Heart left ventricle (tissue), 16 donors: ENCODE measurements at regions of chr2 and their contacts with region 1.

Region 1: GRCh38 chr2:155830817-155831574 is 501.5 kb downstream of the NR4A2 start:
- DNase-seq: no peak
- ATAC-seq: no peak
- H3K4me3 ChIP-seq: no peak overlapping the region
- H3K27ac ChIP-seq: no peak overlapping the region
- H3K4me1 ChIP-seq: no peaks in the 10 kb centered on the region
- H3K27me3 ChIP-seq: no peaks in the 10 kb centered on the region
- CTCF ChIP-seq: no peak
- POLR2A ChIP-seq: no peak

Region 2: DNA sequence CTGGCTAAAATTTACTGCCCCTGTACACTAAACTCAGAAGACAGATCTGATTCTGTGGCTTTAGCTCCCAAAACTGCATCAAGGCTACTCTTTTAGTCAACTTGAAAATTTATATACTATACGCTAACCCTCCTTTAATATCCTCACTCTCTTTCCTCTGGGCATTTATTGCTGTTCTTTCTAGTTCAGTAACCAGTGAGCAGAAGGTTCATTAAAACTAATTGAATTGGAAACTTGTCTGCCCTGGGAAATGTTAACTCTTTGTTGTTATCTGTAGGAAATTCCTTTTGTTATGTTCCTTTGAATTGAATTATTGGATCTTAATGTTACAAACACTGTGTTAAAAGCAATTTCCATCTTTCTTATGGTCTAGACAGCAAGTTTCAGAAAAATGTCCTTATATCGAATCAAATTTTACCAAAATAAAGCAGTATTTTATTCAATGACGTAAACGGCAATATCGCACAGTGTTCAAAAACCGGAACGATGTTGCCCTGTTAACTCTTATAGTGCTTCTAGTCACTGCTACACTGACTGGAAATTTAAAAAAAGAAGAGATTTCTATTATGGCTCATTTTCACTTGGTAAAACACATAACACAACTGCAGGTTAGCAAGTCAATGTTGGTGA is 333.2 kb after region 1 on chr2:
- intact Hi-C with region 1: loop called in 1 of 10 experiments (anchors 5 kb)
- DNase-seq: no peak
- ATAC-seq: no peak
- H3K4me3 ChIP-seq: no peak overlapping the region
- H3K27ac ChIP-seq: no peak overlapping the region
- H3K4me1 ChIP-seq: no peaks in the 10 kb centered on the region
- H3K27me3 ChIP-seq: peaks cover 0 to 6% (median 0%) of the 10 kb centered on the region in 9 donors
- CTCF ChIP-seq: no peak
- POLR2A ChIP-seq: no peak